ENCODE measurements at regions of chr7 and their contacts with region 1.

Region 1: DNA sequence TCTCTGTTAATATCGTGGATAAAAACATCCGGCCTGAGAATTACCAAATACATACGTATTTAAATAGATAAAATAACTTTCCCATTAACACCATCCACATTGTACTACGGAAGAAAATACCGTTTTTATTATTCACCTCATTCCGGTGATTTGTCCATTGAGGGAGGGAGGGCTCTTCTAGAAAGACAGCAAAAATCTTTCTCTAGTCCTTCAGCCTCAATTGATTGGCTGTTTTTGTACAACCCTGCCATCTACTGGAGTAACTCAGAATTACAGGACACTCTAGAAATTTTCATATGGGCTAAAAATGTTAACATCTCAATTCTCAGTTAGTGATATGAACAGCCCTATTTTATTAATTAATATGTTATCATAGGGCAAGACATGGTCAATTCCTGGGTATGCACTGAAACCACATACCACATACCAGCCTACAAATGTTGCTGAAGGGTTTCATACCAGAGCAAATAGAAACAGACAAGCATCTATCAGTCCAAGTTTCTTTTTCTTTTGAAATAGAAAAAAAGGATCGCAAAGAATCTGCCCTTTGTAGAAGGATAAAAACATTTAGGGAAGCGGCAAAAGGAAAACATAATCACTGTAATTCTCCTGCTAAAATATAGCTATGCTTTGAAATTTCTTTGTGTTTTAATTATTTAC is 55.8 kb upstream of the CDCA7L start:
- DNase-seq: peak; percentile 78
- ATAC-seq: peak; percentile 87
- H3K4me3 ChIP-seq: no peak overlapping the region
- H3K4me3 Mint-ChIP-seq: peak overlapping the region; percentile 11
- H3K27ac ChIP-seq: no peak overlapping the region
- H3K27ac Mint-ChIP-seq: no peak overlapping the region
- H3K4me1 ChIP-seq: peaks cover 0 to 6% of the 10 kb centered on the region in 2 donors
- H3K4me1 Mint-ChIP-seq: peaks cover 5% of the 10 kb centered on the region
- H3K27me3 ChIP-seq: peaks cover 0 to 3% (median 0%) of the 10 kb centered on the region in 4 experiments
- H3K27me3 Mint-ChIP-seq: peaks cover 20% of the 10 kb centered on the region
- CTCF ChIP-seq: peak; percentile 94

Region 2: DNA sequence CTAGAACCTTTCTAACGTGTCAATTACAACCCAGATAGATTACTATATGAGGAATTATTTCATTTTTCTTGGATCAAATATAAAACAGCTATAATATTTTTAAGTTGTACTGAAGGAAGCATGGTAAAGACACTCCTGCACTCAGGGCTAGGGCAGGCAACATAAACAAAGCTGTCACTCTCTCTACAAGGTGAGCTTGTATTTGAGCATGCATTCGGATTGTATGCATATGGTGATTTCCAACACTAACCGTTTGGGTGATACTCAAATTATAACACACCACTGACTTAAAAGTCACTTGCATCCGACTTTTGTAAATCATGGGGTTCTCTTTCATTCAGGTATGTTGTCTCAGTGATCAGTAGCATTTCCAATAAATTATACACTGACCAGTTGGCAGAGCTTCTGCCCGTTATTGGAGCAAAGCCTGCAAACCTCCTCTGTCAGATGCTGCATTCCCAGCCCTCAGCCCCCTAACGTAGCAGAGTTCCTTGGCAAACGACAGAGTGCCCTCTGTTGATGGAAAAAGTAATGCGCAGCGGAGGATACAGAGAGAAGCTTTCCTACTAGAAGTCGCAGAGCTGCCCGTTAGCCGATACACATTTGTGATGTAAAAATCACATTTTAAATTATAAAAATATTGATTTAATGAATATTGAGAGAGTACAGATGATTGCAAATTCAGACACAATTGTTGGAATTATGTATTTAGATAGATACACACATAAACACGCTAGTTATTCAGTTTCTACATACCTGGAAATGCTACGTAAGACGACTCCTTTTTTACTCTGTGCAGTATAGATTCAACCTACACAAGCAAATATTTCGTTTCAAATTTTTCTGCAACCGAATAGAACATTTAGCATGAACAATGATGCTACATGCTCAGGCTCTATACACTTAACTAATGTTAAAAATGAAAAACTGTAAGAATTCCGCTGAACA is 747.5 kb before region 1 on chr7:
- CTCF ChIA-PET with region 1: interaction called, 8 read pairs
- POLR2A ChIA-PET with region 1: no interaction called
- intact Hi-C with region 1: loop called (anchors 1 kb)
- DNase-seq: peak; percentile 56
- ATAC-seq: peak; percentile 41
- H3K4me3 ChIP-seq: no peak overlapping the region
- H3K4me3 Mint-ChIP-seq: peak overlapping the region; percentile 9
- H3K27ac ChIP-seq: no peak overlapping the region
- H3K27ac Mint-ChIP-seq: no peak overlapping the region
- H3K4me1 ChIP-seq: no peaks in the 10 kb centered on the region
- H3K4me1 Mint-ChIP-seq: peaks cover 5% of the 10 kb centered on the region
- H3K27me3 ChIP-seq: peaks cover 0 to 31% (median 18%) of the 10 kb centered on the region in 4 experiments
- H3K27me3 Mint-ChIP-seq: peaks cover 39% of the 10 kb centered on the region
- CTCF ChIP-seq: peak; percentile 62

Region 3: DNA sequence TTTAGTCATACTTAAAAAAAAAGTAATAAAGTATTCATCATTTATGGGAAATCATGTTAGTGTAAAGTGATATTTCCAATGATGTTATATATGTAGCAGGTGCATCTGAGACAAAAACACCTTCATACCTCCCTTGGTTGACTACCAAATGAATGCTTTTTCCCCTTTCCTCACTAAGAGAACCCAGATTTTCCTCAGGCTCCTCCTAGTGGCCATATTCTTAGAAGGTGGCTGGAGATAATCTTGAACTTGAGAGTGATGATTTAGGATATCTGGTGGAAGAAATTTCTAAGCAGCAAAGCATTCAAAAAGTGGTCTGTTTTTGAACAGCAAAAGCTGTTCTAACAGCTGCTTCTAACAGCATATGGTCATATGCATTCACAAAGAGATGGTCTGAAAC is 475.5 kb before region 1 on chr7:
- CTCF ChIA-PET with region 1: interaction called, 3 read pairs
- POLR2A ChIA-PET with region 1: no interaction called
- intact Hi-C with region 1: loop called (anchors 2 kb)
- DNase-seq: peak; percentile 11
- ATAC-seq: no peak
- H3K4me3 ChIP-seq: no peak overlapping the region
- H3K4me3 Mint-ChIP-seq: no peak overlapping the region
- H3K27ac ChIP-seq: no peak overlapping the region
- H3K27ac Mint-ChIP-seq: no peak overlapping the region
- H3K4me1 ChIP-seq: no peaks in the 10 kb centered on the region
- H3K4me1 Mint-ChIP-seq: no peaks in the 10 kb centered on the region
- H3K27me3 ChIP-seq: no peaks in the 10 kb centered on the region
- H3K27me3 Mint-ChIP-seq: no peaks in the 10 kb centered on the region
- CTCF ChIP-seq: peak; percentile 38

Region 4: GRCh38 chr7:21731977-21732376 is 269.5 kb before region 1 on chr7:
- CTCF ChIA-PET with region 1: no interaction called
- POLR2A ChIA-PET with region 1: no interaction called
- intact Hi-C with region 1: no loop called
- DNase-seq: no peak
- ATAC-seq: no peak
- H3K4me3 ChIP-seq: no peak overlapping the region
- H3K4me3 Mint-ChIP-seq: no peak overlapping the region
- H3K27ac ChIP-seq: no peak overlapping the region
- H3K27ac Mint-ChIP-seq: no peak overlapping the region
- H3K4me1 ChIP-seq: no peaks in the 10 kb centered on the region
- H3K4me1 Mint-ChIP-seq: no peaks in the 10 kb centered on the region
- H3K27me3 ChIP-seq: no peaks in the 10 kb centered on the region
- H3K27me3 Mint-ChIP-seq: peaks cover 7% of the 10 kb centered on the region
- CTCF ChIP-seq: no peak

Region 5: DNA sequence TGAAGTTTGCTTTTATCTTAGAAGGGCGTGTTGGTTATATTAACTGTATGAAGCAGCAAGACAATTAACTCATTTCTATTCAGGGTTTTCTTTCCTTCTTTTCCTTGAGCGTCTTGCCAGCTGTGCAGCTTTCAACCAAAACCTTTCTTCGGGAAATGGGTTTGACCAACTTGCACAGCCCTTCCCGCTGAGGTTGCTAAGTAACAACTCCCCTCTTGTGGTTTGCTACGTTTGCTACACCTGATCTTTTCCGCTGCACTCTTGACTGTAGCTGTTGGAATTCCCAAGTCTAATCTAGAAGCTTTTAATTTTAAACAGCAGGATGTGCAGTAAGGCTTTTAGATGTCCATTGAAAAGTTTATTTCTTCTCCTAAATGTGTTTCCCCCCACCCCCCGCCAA is 172.6 kb before region 1 on chr7:
- CTCF ChIA-PET with region 1: interaction called, 4 read pairs
- POLR2A ChIA-PET with region 1: no interaction called
- intact Hi-C with region 1: loop called (anchors 10 kb)
- DNase-seq: no peak
- ATAC-seq: no peak
- H3K4me3 ChIP-seq: no peak overlapping the region
- H3K4me3 Mint-ChIP-seq: no peak overlapping the region
- H3K27ac ChIP-seq: no peak overlapping the region
- H3K27ac Mint-ChIP-seq: no peak overlapping the region
- H3K4me1 ChIP-seq: no peaks in the 10 kb centered on the region
- H3K4me1 Mint-ChIP-seq: no peaks in the 10 kb centered on the region
- H3K27me3 ChIP-seq: peaks cover 0 to 3% (median 1%) of the 10 kb centered on the region in 4 experiments
- H3K27me3 Mint-ChIP-seq: peaks cover 29% of the 10 kb centered on the region
- CTCF ChIP-seq: no peak

Region 6: DNA sequence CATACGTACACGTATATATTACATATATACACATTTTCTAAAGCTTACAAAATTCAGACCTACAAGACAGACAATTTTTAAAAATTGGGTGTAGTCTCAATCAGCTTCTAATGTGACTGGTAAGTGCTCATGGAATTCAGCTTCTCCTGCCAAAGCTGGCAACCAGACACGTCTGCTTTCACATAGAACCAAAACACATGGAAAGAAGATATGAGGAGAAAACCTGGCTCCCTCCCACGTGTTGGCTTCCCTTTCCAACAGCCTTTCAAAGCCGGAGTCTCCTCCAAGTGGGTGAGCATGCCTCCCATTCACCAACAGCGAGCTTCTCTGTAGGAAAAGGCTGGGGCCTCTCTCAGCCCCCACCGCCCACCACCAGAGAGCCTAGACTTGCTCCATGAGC is 89.2 kb before region 1 on chr7:
- CTCF ChIA-PET with region 1: interaction called, 10 read pairs
- POLR2A ChIA-PET with region 1: no interaction called
- intact Hi-C with region 1: loop called (anchors 5 kb)
- DNase-seq: no peak
- ATAC-seq: no peak
- H3K4me3 ChIP-seq: no peak overlapping the region
- H3K4me3 Mint-ChIP-seq: no peak overlapping the region
- H3K27ac ChIP-seq: peak overlapping the region in 1 of 2 donors; percentile 64
- H3K27ac Mint-ChIP-seq: peak overlapping the region; percentile 69
- H3K4me1 ChIP-seq: peaks cover 29 to 30% of the 10 kb centered on the region in 2 donors
- H3K4me1 Mint-ChIP-seq: peaks cover 37% of the 10 kb centered on the region
- H3K27me3 ChIP-seq: no peaks in the 10 kb centered on the region
- H3K27me3 Mint-ChIP-seq: no peaks in the 10 kb centered on the region
- CTCF ChIP-seq: no peak

Region 7: GRCh38 chr7:22082886-22083703 is 81.6 kb after region 1 on chr7:
- CTCF ChIA-PET with region 1: interaction called, 3 read pairs
- POLR2A ChIA-PET with region 1: no interaction called
- intact Hi-C with region 1: loop called (anchors 1 kb)
- DNase-seq: peak; percentile 92
- ATAC-seq: peak; percentile 97
- H3K4me3 ChIP-seq: peak overlapping the region; percentile 58 to 80 (median 72)
- H3K4me3 Mint-ChIP-seq: peak overlapping the region; percentile 94
- H3K27ac ChIP-seq: peak overlapping the region; percentile 63 to 68
- H3K27ac Mint-ChIP-seq: peak overlapping the region; percentile 90
- H3K4me1 ChIP-seq: peaks cover 8 to 14% of the 10 kb centered on the region in 2 donors
- H3K4me1 Mint-ChIP-seq: peaks cover 18% of the 10 kb centered on the region
- H3K27me3 ChIP-seq: peaks cover 0 to 11% (median 7%) of the 10 kb centered on the region in 4 experiments
- H3K27me3 Mint-ChIP-seq: peaks cover 25% of the 10 kb centered on the region
- CTCF ChIP-seq: peak; percentile 98

Region 8: DNA sequence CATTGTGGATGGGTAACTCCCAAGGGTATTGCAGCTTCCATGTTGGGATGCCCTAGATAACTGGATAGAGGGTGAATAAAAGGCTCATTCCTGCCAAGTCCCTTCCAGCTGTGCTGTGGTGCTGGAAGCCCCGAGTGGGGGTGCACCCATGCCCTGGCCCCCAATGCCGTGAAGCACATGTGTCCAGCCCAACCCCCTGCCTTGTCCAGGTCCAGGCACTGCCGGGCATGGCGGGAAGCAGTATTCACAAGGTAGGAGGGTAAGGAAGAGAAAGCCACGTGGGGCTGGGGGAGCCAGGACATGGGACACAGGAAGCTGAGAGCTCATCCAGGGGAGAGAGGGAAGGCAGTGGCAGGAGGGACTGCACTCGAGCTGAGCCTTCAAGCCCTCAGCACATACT is 92.5 kb after region 1 on chr7:
- CTCF ChIA-PET with region 1: no interaction called
- POLR2A ChIA-PET with region 1: no interaction called
- intact Hi-C with region 1: no loop called
- DNase-seq: no peak
- ATAC-seq: no peak
- H3K4me3 ChIP-seq: no peak overlapping the region
- H3K4me3 Mint-ChIP-seq: no peak overlapping the region
- H3K27ac ChIP-seq: no peak overlapping the region
- H3K27ac Mint-ChIP-seq: no peak overlapping the region
- H3K4me1 ChIP-seq: no peaks in the 10 kb centered on the region
- H3K4me1 Mint-ChIP-seq: no peaks in the 10 kb centered on the region
- H3K27me3 ChIP-seq: peaks cover 0 to 10% (median 1%) of the 10 kb centered on the region in 4 experiments
- H3K27me3 Mint-ChIP-seq: peaks cover 26% of the 10 kb centered on the region
- CTCF ChIP-seq: no peak

Measured in B cell (primary cell).